ENCODE measurements at regions of chr3 and their contacts with region 1.

Region 1: DNA sequence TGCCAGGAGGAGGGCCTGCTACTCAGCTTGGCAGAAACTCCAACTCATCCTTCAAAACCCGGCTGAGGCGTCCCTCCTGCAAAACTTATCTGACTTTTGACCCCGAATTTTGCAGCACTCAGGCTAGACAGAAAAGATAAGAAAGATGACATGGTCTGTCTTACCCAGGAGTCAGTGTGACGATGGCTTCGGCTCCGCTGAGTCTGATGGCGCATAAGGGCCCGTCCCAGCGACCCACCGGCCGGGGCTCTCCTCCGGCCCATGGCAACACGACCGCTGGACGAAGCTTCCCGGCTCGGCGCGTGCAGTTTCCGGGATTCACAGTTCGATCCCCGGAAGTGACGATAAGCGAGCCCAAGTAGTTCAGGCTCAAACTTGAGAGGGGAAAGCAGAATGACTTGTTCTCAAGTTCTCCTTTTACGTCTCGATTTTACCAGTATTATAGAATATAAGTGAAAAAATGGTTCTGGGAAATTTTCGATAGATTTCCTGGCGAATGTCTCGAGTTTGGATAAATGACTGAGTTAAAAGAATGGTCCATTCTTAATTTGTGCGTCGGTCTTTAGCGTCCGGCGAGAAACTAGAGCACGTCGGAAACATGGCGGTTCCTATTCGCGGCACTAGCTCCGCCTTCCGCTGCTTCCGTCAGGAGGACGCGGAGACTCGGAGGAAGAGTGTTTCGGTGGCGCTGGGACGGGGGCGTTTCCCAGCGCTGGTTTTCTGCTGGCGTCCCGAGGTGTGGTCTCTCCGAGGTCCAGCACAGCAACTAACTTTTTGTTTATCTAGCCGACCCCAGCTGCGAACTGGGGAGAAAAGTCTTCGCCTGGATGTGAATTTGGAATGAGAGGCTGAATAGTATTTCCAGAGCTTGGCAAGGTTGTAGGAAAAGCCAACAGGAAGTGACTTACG is at the start of gene LSG1:
- H3K4me3 Mint-ChIP-seq: peak within 1 kb of the TSS; percentile 97
- H3K27ac Mint-ChIP-seq: peak within 1 kb of the TSS; percentile 95
- H3K4me1 Mint-ChIP-seq: peaks cover 24% of the 10 kb centered on the region
- H3K27me3 Mint-ChIP-seq: peaks cover 6% of the 10 kb centered on the region

Region 2: GRCh38 chr3:194212845-194213320 is 459.3 kb before region 1 on chr3:
- intact Hi-C with region 1: no loop called
- H3K4me3 Mint-ChIP-seq: no peak overlapping the region
- H3K27ac Mint-ChIP-seq: no peak overlapping the region
- H3K4me1 Mint-ChIP-seq: no peaks in the 10 kb centered on the region
- H3K27me3 Mint-ChIP-seq: peaks cover 20% of the 10 kb centered on the region

Region 3: GRCh38 chr3:194952841-194953241 is 280.7 kb after region 1 on chr3:
- intact Hi-C with region 1: loop called (anchors 1 kb)
- H3K4me3 Mint-ChIP-seq: no peak overlapping the region
- H3K27ac Mint-ChIP-seq: no peak overlapping the region
- H3K4me1 Mint-ChIP-seq: peaks cover 28% of the 10 kb centered on the region
- H3K27me3 Mint-ChIP-seq: peaks cover 9% of the 10 kb centered on the region

Region 4: DNA sequence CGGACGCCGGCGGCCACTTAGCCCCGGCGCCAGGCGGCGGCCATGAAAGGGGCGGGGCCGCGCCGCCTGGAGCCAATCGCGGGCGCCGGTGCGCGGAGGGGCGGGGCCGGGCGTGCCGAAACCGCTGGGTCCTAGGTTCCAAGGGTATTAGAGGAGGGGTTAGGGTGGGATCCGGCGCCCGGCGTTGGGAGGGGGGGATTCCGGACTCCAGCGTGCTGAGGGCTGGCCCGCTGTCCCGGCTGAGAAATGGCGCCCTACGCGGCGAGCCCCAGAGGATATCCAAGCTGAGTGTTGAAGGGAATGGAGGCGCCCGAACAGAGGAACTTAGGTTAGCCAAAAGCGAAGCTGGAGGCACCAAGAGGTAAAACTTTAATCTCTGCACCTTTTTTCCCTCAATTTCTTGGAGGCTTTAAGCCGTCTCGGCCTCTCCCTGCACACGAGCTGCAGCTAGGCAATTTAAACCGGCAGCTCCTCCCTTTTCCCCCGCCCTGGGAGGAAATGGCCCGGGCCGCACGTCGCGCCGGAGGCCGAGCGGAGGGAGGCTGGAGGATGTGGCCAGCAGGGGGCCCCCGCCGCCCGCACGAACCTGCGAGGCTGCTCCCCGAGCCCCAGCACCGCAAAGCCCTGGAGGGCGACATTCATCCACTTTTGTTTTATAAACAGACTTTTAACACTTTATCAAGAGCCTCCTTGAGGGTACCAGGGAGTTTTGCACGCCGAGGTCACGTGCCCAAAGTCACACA is 599.1 kb after region 1 on chr3 and contains the start of gene XXYLT1:
- intact Hi-C with region 1: loop called (anchors 2 kb)
- H3K4me3 Mint-ChIP-seq: peak within 1 kb of the TSS; percentile 89
- H3K27ac Mint-ChIP-seq: peak within 1 kb of the TSS; percentile 81
- H3K4me1 Mint-ChIP-seq: peaks cover 43% of the 10 kb centered on the region
- H3K27me3 Mint-ChIP-seq: no peaks in the 10 kb centered on the region